ENCODE measurements at regions of chr1 and their contacts with region 1.

Region 1: DNA sequence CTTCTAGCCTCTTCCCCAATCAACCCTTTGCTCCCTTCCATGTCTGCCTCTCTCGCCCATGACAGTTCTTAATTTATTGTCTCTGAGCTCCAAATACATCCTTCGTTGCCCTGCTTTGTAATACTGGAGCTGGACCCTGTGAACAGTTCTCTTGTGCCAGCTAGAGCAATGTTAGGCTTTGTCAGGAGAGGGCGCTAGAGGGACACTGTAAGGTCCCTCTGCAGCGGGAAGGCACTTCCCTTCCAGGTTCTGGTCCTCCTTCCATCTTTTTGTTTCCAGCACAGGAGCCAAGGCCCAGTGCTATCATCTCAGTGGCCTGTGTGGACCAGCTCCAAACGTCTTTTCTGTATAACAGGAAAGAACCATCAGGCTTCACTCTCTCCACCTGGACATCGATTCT is 95.9 kb downstream of the PTPRU start:
- DNase-seq: peak; percentile 85
- ATAC-seq: peak; percentile 95
- H3K4me3 Mint-ChIP-seq: no peak overlapping the region
- H3K27ac Mint-ChIP-seq: no peak overlapping the region
- H3K4me1 Mint-ChIP-seq: peaks cover 10% of the 10 kb centered on the region
- H3K27me3 Mint-ChIP-seq: peaks cover 5% of the 10 kb centered on the region; the same call in 1 of the 2 replicates
- CTCF ChIP-seq: peak; percentile 80

Region 2: GRCh38 chr1:29120961-29121485 is 211.2 kb before region 1 on chr1:
- CTCF ChIA-PET with region 1: no interaction called
- POLR2A ChIA-PET with region 1: no interaction called
- DNase-seq: peak; percentile 87
- ATAC-seq: peak; percentile 33
- H3K4me3 Mint-ChIP-seq: peak overlapping the region; percentile 45
- H3K27ac Mint-ChIP-seq: no peak overlapping the region
- H3K4me1 Mint-ChIP-seq: peaks cover 18% of the 10 kb centered on the region
- H3K27me3 Mint-ChIP-seq: peaks cover 23% of the 10 kb centered on the region
- CTCF ChIP-seq: peak; percentile 56

Region 3: GRCh38 chr1:29356663-29357062 is 24.5 kb after region 1 on chr1:
- CTCF ChIA-PET with region 1: interaction called, 11 read pairs
- POLR2A ChIA-PET with region 1: no interaction called
- DNase-seq: peak; percentile 74
- ATAC-seq: peak; percentile 98
- H3K4me3 Mint-ChIP-seq: no peak overlapping the region
- H3K27ac Mint-ChIP-seq: no peak overlapping the region
- H3K4me1 Mint-ChIP-seq: peaks cover 11% of the 10 kb centered on the region
- H3K27me3 Mint-ChIP-seq: peaks cover 17% of the 10 kb centered on the region
- CTCF ChIP-seq: no peak

Region 4: DNA sequence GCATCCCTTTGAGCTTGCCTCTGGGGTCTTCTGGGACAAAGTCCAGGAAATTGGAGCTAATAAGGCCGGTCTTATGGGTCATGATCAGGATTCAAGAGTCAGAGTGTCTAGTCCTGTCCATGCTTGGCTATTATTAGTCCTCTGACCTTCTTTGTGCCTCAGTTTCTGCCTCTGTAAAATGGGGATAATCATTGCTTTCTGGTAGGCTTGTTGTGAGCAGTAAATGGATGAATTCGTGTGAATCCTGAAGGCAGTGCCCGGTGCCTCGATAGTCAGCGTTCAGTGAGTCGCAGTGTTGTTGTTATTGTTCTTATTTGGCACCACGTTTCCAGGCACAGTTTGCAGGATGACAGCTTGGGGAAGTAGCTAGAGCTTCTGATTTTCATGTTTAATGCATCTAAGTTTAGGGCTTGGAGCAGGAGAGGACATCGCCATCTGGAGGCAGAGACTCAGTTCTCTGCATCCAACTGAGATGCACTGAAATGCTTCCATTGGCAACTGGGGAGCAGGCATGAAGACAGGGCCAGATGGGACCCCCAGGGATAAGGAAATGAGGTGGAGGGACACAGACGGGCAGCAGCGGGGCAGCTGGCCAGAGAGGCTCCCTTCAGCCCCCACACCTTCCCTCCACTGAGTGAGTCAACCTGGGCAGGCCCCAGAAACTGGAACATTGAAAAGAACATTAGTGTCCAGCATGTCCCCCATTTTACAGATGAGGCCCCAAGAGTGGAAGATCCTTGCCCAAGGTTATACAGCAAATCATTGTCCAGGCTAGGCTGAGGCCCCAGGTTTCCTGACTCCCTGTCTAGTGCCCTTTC is 64.4 kb after region 1 on chr1:
- CTCF ChIA-PET with region 1: interaction called, 11 read pairs
- POLR2A ChIA-PET with region 1: no interaction called
- DNase-seq: no peak
- ATAC-seq: peak; percentile 38
- H3K4me3 Mint-ChIP-seq: no peak overlapping the region
- H3K27ac Mint-ChIP-seq: no peak overlapping the region
- H3K4me1 Mint-ChIP-seq: peaks cover 2% of the 10 kb centered on the region; the same call in 1 of the 2 replicates
- H3K27me3 Mint-ChIP-seq: peaks cover 5% of the 10 kb centered on the region; the same call in 1 of the 2 replicates
- CTCF ChIP-seq: no peak

Region 5: GRCh38 chr1:29415156-29415830 is 83.1 kb after region 1 on chr1:
- CTCF ChIA-PET with region 1: interaction called, 12 read pairs
- POLR2A ChIA-PET with region 1: no interaction called
- DNase-seq: peak; percentile 33
- ATAC-seq: peak; percentile 68
- H3K4me3 Mint-ChIP-seq: no peak overlapping the region
- H3K27ac Mint-ChIP-seq: no peak overlapping the region
- H3K4me1 Mint-ChIP-seq: peaks cover 11% of the 10 kb centered on the region
- H3K27me3 Mint-ChIP-seq: no peaks in the 10 kb centered on the region; the same call in 1 of the 2 replicates
- CTCF ChIP-seq: no peak

Region 6: GRCh38 chr1:29429656-29430055 is 97.5 kb after region 1 on chr1:
- CTCF ChIA-PET with region 1: no interaction called
- POLR2A ChIA-PET with region 1: no interaction called
- DNase-seq: no peak
- ATAC-seq: no peak
- H3K4me3 Mint-ChIP-seq: no peak overlapping the region
- H3K27ac Mint-ChIP-seq: no peak overlapping the region
- H3K4me1 Mint-ChIP-seq: 0 out of 2 replicates have a peak, but pooled peaks cover 1% of the 10 kb centered on the region
- H3K27me3 Mint-ChIP-seq: peaks cover 3% of the 10 kb centered on the region; the same call in 1 of the 2 replicates
- CTCF ChIP-seq: no peak

Measured in WTC11 (cell line).